ENCODE measurements at regions of chr5 and their contacts with region 1.

Region 1: DNA sequence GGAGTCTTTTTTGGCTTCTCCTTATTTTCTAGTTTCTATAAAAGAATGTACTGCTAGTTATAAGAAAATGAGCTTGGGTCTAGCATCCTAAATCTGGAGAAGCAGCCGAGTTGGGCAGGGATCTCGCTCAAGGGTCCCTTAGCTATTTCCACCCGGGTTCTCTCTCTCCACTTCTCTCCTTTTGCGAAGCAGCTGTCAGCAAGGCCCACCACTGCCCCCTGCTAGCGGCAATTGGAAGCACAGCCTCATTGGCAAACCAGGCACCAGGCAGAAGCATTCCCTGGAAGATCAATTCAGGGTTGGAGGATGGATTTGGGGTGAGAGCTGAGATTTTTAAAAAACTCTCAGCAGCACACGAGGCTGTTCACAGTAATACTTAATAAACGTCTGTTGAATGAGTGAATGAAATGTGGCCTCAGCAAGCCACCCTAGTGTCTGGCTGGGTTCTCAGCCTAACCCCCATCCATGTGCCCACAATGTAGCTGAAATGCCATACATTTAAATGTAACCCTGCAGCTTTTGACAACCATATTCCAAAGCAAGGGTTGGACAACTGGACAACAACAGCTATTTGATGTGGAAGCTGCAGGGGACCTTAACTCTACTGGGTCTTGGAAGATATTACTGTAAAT is 34.6 kb upstream of the TNIP1 start:
- DNase-seq: peak; percentile 80
- H3K4me3 Mint-ChIP-seq: no peak overlapping the region
- H3K27ac Mint-ChIP-seq: peak overlapping the region; percentile 38
- H3K4me1 Mint-ChIP-seq: no peaks in the 10 kb centered on the region
- H3K27me3 Mint-ChIP-seq: no peaks in the 10 kb centered on the region

Region 2: DNA sequence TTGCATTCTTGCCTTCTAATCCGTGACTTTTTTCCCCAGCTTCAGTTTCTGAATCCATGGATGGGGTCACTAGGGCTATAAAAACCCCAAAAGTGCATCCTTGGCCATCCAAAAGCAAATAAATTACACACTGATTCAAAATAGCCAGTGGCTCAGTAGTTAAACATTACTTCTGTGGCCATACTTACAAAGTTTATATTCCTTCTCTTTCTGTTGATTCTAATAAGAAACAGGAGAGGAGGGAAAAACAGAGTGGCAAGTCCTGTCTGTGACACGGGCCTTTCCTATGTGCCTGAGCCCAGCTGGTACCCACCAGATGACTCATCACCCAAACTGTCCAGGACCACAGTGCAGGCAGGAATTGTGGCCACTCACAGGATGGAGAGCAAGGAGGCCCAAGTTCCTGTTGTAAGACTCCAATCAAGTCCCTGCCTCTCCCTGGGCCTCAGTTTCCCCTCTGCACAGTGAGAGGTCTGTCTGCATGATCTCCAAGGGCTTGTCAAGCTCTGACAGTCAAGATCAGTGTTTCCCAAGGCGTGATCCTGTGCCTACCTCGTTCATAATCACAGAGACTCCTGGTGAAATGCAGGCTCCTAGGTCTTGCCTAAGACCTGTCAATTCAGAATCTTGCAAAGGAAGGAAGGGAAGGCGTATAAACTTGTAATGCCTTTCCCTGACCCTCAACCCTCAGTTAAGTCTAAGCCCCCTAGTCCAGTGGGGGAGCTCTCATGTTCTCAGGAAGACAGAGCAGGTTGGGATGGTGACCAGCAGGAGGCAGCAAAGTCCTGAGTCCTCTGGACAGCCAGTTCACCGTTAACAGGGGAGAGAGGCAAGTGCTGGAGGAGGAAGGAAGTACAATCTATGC is 64.1 kb before region 1 on chr5:
- CTCF ChIA-PET with region 1: interaction called, 264 read pairs
- DNase-seq: peak; percentile 82
- H3K4me3 Mint-ChIP-seq: no peak overlapping the region
- H3K27ac Mint-ChIP-seq: peak overlapping the region; percentile 17
- H3K4me1 Mint-ChIP-seq: peaks cover 7% of the 10 kb centered on the region
- H3K27me3 Mint-ChIP-seq: no peaks in the 10 kb centered on the region

Region 3: GRCh38 chr5:151068433-151069197 is 46.8 kb before region 1 on chr5:
- CTCF ChIA-PET with region 1: interaction called, 16 read pairs
- DNase-seq: no peak
- H3K4me3 Mint-ChIP-seq: no peak overlapping the region
- H3K27ac Mint-ChIP-seq: no peak overlapping the region
- H3K4me1 Mint-ChIP-seq: peaks cover 51% of the 10 kb centered on the region
- H3K27me3 Mint-ChIP-seq: no peaks in the 10 kb centered on the region

Region 4: DNA sequence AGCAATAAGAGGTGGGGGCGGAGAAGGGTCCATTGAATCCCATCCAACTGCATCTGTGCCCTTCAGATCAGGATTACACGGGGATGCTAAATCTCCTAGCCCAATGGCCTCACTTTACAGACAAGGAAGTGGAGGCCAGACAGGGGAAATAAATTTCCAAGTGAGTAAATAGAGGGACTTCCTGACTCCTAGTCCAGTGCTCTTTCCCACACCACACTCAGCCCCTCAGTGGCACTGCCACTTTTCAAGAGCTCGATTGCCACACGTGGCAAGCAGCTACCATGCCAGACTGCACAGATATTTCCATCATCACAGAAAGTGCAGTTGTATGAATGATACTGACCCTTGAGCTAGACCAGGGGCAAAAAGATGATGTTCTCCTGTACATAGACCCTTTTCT is 26.4 kb before region 1 on chr5:
- CTCF ChIA-PET with region 1: interaction called, 27 read pairs
- DNase-seq: no peak
- H3K4me3 Mint-ChIP-seq: no peak overlapping the region
- H3K27ac Mint-ChIP-seq: peak overlapping the region; percentile 51
- H3K4me1 Mint-ChIP-seq: peaks cover 55% of the 10 kb centered on the region
- H3K27me3 Mint-ChIP-seq: peaks cover 8% of the 10 kb centered on the region

Region 5: DNA sequence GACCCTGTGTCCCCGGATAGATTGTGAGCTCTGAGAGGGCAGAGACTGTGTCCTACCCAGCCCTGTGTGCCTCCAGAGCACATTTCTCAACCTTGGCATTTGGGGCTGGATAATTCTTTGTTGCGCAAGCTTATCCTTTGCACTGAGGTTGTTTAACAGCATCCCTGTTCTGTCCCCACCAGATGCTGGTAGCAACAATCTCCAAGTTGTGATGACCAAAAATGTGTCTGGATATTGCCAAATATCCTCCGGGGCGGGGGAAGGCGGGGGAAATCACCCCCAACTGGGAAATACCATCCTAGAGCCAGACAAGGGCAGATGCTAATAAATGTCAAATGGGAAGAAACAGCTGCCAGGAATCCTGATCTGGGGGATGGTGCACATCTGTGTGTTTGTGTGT is 10.6 kb before region 1 on chr5:
- CTCF ChIA-PET with region 1: interaction called, 43 read pairs
- DNase-seq: no peak
- H3K4me3 Mint-ChIP-seq: no peak overlapping the region
- H3K27ac Mint-ChIP-seq: no peak overlapping the region
- H3K4me1 Mint-ChIP-seq: peaks cover 13% of the 10 kb centered on the region
- H3K27me3 Mint-ChIP-seq: no peaks in the 10 kb centered on the region

Region 6: GRCh38 chr5:151134238-151134637 is 18.8 kb after region 1 on chr5:
- CTCF ChIA-PET with region 1: interaction called, 13 read pairs
- DNase-seq: no peak
- H3K4me3 Mint-ChIP-seq: no peak overlapping the region
- H3K27ac Mint-ChIP-seq: peak overlapping the region; percentile 7
- H3K4me1 Mint-ChIP-seq: peaks cover 64% of the 10 kb centered on the region
- H3K27me3 Mint-ChIP-seq: no peaks in the 10 kb centered on the region

Region 7: DNA sequence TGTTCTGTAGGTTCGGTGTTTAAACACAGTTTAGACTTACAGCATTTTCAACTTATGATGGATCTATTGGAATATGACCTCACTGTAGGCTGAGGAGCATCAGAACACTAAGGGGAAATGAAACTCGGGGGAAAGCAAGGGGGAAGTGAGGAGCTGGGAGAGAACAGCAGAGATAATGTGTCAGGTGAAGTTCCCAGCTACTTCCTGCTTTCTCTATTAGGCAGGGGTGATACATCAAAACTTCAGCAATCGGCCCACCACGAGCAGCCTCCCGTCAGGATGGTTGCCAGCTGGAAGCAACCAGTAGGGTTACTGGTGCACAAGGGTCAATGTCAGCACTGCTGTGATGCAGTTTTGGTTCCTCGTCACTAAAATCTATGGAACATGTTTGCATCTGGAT is 441.4 kb after region 1 on chr5:
- CTCF ChIA-PET with region 1: no interaction called
- DNase-seq: no peak
- H3K4me3 Mint-ChIP-seq: no peak overlapping the region
- H3K27ac Mint-ChIP-seq: no peak overlapping the region
- H3K4me1 Mint-ChIP-seq: no peaks in the 10 kb centered on the region
- H3K27me3 Mint-ChIP-seq: peaks cover 15% of the 10 kb centered on the region